A549 (cell line): ENCODE measurements at regions of chr1 and their contacts with region 1.

Region 1: DNA sequence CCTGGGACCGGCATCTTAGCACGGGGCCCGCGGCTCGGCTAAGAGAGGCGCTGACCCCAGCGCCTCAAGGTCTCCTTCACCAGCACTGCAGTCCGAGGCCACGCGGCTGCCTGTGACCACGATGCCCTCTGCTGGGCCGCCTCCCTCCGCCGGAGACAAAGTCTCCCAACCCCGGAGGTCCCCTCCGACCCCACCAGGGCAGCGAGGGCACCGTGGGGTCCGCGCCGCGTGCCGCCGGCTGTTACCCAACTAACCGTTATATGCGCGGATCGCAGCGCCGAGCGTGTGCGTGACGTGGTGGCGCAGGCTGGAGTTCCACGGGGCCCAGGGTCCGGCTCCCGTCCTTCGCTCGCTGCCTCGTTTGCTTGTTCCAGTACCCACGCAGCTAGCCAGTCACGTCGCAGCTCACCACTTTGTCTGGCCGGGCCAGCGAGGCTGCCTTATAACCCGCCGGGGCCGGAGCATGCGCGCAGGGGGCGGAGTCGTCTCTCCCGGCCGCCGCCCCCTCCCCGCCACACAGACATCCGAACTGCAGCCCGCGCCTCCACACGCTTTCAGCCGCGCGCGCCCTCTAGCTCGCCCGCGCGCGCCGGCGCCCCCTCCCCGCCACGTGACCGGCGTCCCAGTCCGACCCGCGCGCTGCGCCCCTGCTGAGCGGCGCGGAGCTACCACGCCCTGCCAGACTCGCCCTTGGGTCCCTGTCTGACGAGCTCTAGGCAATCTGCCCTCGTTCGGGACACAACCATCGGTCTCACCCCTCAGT is at the start of gene SLC16A1:
- DNase-seq: peak; percentile 67 to 92
- ATAC-seq: peak; percentile 82 to 89
- H3K4me3 ChIP-seq: peak within 1 kb of the TSS; percentile 66
- H3K27ac ChIP-seq: peak within 1 kb of the TSS; percentile 93 to 98
- H3K4me1 ChIP-seq: peaks cover 27% of the 10 kb centered on the region
- CTCF ChIP-seq: peak; percentile 46
- EP300 ChIP-seq: no peak
- POLR2A ChIP-seq: peak; percentile 99
- RAD21 ChIP-seq: peak; percentile 28 to 64; a peak in 3 of 5 replicates
- polyA plus RNA-seq, gene SLC16A1: 67.9 and 70.2 TPM in 2 replicates

Region 2: DNA sequence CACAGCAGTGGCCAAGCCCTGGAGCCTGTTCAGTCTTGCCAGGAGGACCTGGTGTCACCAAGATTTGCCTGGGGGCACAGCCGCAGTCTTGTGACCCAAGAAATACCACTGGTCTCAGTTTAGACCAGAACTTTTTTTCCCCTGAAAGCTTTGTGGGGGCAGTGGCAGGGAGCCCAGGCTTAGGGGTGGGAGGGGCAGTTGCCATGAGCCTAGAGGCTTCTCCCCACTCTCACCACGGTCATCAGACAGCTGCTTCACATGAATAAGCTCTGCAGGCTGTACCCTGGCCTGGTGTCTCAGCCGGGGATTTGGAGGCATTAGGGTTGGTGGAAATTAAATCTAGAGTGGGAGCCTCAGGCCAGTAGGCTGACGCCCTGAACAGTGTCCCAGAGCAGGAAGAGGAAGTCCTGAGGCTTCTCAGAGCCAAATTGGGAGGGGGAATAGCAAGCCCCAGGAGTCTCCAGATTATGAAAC is 73.7 kb before region 1 on chr1:
- CTCF ChIA-PET with region 1: interaction called, 15 read pairs
- POLR2A ChIA-PET with region 1: no interaction called
- DNase-seq: no peak
- ATAC-seq: no peak
- H3K4me3 ChIP-seq: no peak overlapping the region
- H3K27ac ChIP-seq: no peak overlapping the region
- H3K4me1 ChIP-seq: no peaks in the 10 kb centered on the region
- CTCF ChIP-seq: no peak
- EP300 ChIP-seq: no peak
- POLR2A ChIP-seq: no peak
- RAD21 ChIP-seq: no peak

Region 3: GRCh38 chr1:112935461-112936289 is 20.3 kb before region 1 on chr1:
- CTCF ChIA-PET with region 1: interaction called, 5 read pairs
- POLR2A ChIA-PET with region 1: interaction called, 21 read pairs
- DNase-seq: peak; percentile 38 to 43
- ATAC-seq: peak; percentile 77 to 82
- H3K4me3 ChIP-seq: no peak overlapping the region
- H3K27ac ChIP-seq: peak overlapping the region; percentile 68 to 91
- H3K4me1 ChIP-seq: peaks cover 42% of the 10 kb centered on the region
- CTCF ChIP-seq: no peak
- EP300 ChIP-seq: no peak
- POLR2A ChIP-seq: no peak
- RAD21 ChIP-seq: no peak